ENCODE measurements at regions of chr1 and their contacts with region 1.

Region 1: DNA sequence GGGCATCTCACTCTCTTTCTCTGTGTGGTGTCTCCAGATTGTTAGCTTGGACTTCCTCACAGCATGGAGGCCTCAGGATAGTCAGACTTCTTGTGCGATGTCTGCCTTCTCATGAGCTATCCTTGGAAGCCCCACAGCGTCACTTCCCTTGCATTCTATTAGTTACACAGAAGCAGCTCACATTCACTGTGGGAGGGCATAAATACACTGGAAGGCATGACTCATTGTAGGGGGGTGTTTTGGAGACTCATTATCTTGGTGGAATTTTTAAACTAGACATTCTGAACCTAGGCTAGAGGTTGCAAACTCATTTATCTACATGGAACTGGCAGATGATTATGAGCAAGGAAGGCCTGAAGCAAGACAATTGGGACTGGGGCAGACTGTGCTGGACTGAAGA is 21.4 kb upstream of the FASLG start:
- DNase-seq: no peak
- H3K4me3 ChIP-seq: no peak overlapping the region
- H3K27ac ChIP-seq: no peak overlapping the region
- H3K4me1 ChIP-seq: peaks cover under 1% of the 10 kb centered on the region
- H3K27me3 ChIP-seq: peaks cover 4% of the 10 kb centered on the region in 2 experiments
- CTCF ChIP-seq: no peak
- POLR2A ChIP-seq: no peak

Region 2: GRCh38 chr1:172532700-172533509 is 104.6 kb before region 1 on chr1 and contains the start of gene SUCO:
- CTCF ChIA-PET with region 1: no interaction called
- POLR2A ChIA-PET with region 1: no interaction called
- dilution Hi-C with region 1: no loop called
- intact Hi-C with region 1: no loop called
- DNase-seq: peak; percentile 100
- H3K4me3 ChIP-seq: peak within 1 kb of the TSS; percentile 48 to 92 (median 70)
- H3K27ac ChIP-seq: peak within 1 kb of the TSS; percentile 84
- H3K4me1 ChIP-seq: peaks cover 16% of the 10 kb centered on the region
- H3K27me3 ChIP-seq: peaks cover 7 to 15% of the 10 kb centered on the region in 2 experiments
- CTCF ChIP-seq: peak in 1 of 2 donors; percentile 22
- POLR2A ChIP-seq: peak; percentile 73
- total RNA-seq, gene SUCO: 26.6 and 27.2 TPM in 2 replicates

Region 3: DNA sequence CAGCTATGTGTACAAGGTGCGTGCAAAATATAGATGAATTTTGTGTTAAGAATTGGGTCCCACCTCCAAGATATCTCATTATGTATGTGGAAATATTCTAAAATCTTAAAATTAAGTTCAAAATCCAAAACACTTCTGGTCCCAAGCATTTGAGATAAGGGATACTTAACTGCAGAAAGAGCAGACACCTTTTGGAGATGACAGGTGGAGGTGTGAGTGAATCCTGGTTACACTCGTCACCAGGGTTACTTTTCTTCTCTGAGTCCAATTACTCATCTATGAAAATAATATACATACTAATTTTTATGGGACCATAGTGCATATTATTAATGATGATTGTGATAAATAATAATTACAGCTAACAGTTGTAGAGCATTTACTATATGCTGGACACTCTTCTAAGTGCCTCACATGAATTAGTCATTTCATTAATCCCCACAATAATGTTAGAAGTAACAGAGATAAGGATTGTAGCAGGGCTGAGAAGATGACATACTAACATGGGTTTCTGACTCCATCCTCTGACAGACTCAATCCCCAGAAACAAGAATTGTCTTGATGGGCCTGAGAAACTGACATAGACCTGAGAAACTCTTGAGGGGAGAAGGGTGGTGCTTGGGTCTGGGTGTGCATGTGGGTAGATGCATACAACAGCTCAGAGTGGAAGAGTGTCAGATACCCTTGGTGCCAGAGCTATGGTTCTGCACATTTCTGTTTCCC is 13.1 kb after region 1 on chr1:
- CTCF ChIA-PET with region 1: no interaction called
- POLR2A ChIA-PET with region 1: interaction called, 11 read pairs
- dilution Hi-C with region 1: no loop called
- intact Hi-C with region 1: no loop called
- DNase-seq: no peak
- H3K4me3 ChIP-seq: no peak overlapping the region
- H3K27ac ChIP-seq: no peak overlapping the region
- H3K4me1 ChIP-seq: peaks cover 6% of the 10 kb centered on the region
- H3K27me3 ChIP-seq: no peaks in the 10 kb centered on the region
- CTCF ChIP-seq: no peak
- POLR2A ChIP-seq: no peak

Region 4: DNA sequence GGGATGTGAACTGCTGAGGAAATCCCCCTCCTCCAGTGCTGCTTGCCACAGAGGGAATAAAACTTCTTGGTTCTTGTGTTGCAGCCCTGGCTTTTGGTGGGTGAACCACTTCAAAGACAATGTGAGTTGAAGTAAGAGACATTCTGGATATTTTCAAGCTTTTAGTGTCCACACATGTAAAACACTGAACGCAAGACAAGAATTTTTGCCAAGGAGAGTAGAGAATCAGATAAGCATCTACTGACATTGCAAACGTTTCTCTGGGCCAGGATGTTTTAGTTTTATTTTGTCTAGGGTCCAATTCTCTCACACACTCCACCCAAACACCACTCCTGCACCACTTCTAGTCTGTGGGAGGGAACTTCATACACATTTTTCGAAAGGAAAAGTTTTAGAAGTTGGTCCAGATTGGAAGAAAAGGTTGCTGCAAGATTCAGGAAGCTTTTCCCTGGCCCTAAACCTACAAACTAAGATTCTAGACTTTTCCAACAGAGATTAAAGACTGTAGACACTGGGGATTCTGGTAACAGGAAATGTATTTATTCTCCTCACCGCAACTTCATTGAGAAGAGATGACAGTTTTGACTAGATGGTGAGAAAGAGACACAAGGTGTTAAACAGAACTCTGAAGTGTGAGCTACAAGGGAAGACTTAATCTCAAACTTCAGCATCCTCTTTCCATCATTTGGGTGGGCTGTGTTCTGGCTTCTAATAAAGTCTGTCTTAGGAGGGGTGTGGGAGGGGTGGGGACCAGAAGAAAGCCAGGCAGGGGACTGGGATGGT is 37.5 kb after region 1 on chr1:
- CTCF ChIA-PET with region 1: no interaction called
- POLR2A ChIA-PET with region 1: no interaction called
- dilution Hi-C with region 1: no loop called
- intact Hi-C with region 1: no loop called
- DNase-seq: no peak
- H3K4me3 ChIP-seq: no peak overlapping the region
- H3K27ac ChIP-seq: no peak overlapping the region
- H3K4me1 ChIP-seq: peaks cover 2% of the 10 kb centered on the region
- H3K27me3 ChIP-seq: peaks cover 6 to 7% of the 10 kb centered on the region in 2 experiments
- CTCF ChIP-seq: no peak
- POLR2A ChIP-seq: no peak

Measured in endothelial cell of umbilical vein (primary cell).